Naive thymus-derived CD4-positive, alpha-beta T cell (primary cell): ENCODE measurements at regions of chr9 and their contacts with region 1.

Region 1: DNA sequence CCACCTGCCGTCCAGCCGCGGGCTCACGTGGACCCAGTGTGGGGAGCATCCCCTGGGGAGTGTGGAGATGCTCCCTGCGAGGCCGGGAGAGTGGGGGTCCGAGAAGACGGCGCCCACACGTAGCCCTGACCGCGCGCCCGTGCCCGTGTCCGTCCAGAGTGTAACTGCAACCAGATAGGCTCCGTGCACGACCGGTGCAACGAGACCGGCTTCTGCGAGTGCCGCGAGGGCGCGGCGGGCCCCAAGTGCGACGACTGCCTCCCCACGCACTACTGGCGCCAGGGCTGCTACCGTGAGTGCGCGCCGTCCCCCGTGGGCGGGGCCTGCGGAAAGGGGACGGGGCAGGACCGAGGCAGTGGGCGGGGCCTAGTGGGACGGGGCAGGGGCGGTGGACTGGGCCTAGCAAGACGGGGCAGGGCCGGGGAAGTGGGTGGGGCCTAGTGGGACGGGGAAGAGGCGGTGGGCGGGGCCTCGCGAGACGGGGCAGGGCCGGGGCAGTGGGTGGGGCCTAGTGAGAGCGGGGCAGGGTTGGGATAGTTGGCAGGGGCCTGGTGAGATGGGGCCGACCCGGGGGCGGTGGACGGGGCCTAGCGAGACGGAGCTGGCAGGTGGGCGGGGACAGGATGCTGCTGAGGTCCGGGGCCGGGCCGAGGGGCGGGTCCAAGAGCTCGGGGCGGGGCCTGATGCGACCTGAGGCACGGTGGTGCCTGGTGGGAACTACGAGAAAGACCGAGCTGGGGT is 79.1 kb downstream of the NTNG2 start:
- DNase-seq: peak; percentile 98 to 100 (median 99)
- ATAC-seq: peak; percentile 94
- H3K4me3 ChIP-seq: peak overlapping the region; percentile 77
- H3K4me3 Mint-ChIP-seq: peak overlapping the region; percentile 97 to 99 (median 98)
- H3K27ac ChIP-seq: peak overlapping the region; percentile 69
- H3K27ac Mint-ChIP-seq: peak overlapping the region; percentile 90 to 96 (median 94)
- H3K4me1 ChIP-seq: peaks cover 11 to 17% of the 10 kb centered on the region in 2 donors
- H3K4me1 Mint-ChIP-seq: peaks cover 5 to 24% (median 21%) of the 10 kb centered on the region in 7 donors
- H3K27me3 ChIP-seq: no peaks in the 10 kb centered on the region
- H3K27me3 Mint-ChIP-seq: peaks cover 0 to 15% (median 0%) of the 10 kb centered on the region in 5 donors

Region 2: DNA sequence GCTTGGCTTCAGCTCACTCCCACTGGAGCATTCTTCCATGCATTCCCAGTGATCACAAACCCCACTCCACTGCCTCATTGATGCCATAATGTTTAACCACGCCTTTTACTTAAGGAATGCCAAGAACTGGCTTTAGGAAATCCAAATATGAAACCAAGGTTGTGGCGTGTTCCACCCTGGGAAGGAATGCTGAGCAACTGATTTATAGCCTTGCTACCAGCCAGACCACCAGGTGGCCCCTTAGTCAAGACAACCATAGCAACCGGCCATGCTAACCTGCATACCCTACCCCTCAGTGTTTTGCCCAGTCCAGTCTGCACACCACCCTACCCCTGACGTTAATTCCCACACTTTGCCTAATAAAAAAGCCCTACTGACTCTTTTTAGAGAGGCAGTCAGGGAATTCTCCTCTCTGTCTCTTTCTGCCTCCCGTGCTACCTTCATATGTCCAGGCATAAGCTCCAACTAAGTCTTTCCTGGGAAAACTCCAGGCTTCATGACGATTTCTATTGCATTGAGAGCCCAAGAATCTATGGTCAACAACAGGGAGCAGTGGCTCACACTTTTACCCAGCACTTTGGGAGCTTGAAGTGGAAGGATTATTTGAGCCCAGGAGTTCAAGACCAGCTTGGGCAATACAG is 874.0 kb before region 1 on chr9:
- CTCF ChIA-PET with region 1: no interaction called
- POLR2A ChIA-PET with region 1: no interaction called
- intact Hi-C with region 1: loop called in 1 of 2 experiments (anchors 5 kb)
- DNase-seq: no peak
- ATAC-seq: no peak
- H3K4me3 ChIP-seq: no peak overlapping the region
- H3K4me3 Mint-ChIP-seq: no peak overlapping the region
- H3K27ac ChIP-seq: no peak overlapping the region
- H3K27ac Mint-ChIP-seq: peak overlapping the region in 1 of 9 donors; percentile 31
- H3K4me1 ChIP-seq: peaks cover 0 to under 1% of the 10 kb centered on the region in 2 donors
- H3K4me1 Mint-ChIP-seq: peaks cover 1 to 43% (median 19%) of the 10 kb centered on the region in 7 donors
- H3K27me3 ChIP-seq: no peaks in the 10 kb centered on the region
- H3K27me3 Mint-ChIP-seq: no peaks in the 10 kb centered on the region

Region 3: GRCh38 chr9:131755541-131756198 is 485.3 kb before region 1 on chr9:
- CTCF ChIA-PET with region 1: interaction called, 7 read pairs
- POLR2A ChIA-PET with region 1: interaction called, 3 read pairs
- intact Hi-C with region 1: loop called in 1 of 2 experiments (anchors 2 kb)
- DNase-seq: peak; percentile 67 to 84 (median 80)
- ATAC-seq: peak; percentile 100
- H3K4me3 ChIP-seq: no peak overlapping the region
- H3K4me3 Mint-ChIP-seq: peak overlapping the region in 6 of 10 donors; percentile 1 to 68 (median 33)
- H3K27ac ChIP-seq: no peak overlapping the region
- H3K27ac Mint-ChIP-seq: peak overlapping the region in 5 of 9 donors; percentile 7 to 65 (median 23)
- H3K4me1 ChIP-seq: peaks cover 0 to 4% of the 10 kb centered on the region in 2 donors
- H3K4me1 Mint-ChIP-seq: peaks cover 5 to 7% (median 6%) of the 10 kb centered on the region in 7 donors
- H3K27me3 ChIP-seq: no peaks in the 10 kb centered on the region
- H3K27me3 Mint-ChIP-seq: peaks cover 0 to 28% (median 0%) of the 10 kb centered on the region in 5 donors

Region 4: GRCh38 chr9:132160802-132161742 is 79.9 kb before region 1 on chr9:
- CTCF ChIA-PET with region 1: interaction called, 5 read pairs
- POLR2A ChIA-PET with region 1: interaction called, 4 read pairs
- intact Hi-C with region 1: loop called in 1 of 2 experiments (anchors 2 kb)
- DNase-seq: peak in 8 of 9 donors; percentile 21 to 54 (median 25)
- ATAC-seq: peak; percentile 83
- H3K4me3 ChIP-seq: peak overlapping the region; percentile 64
- H3K4me3 Mint-ChIP-seq: peak overlapping the region; percentile 90 to 100 (median 94)
- H3K27ac ChIP-seq: no peak overlapping the region
- H3K27ac Mint-ChIP-seq: peak overlapping the region in 7 of 9 donors; percentile 41 to 87 (median 72)
- H3K4me1 ChIP-seq: peaks cover 6% of the 10 kb centered on the region in 2 donors
- H3K4me1 Mint-ChIP-seq: peaks cover 6 to 17% (median 9%) of the 10 kb centered on the region in 7 donors
- H3K27me3 ChIP-seq: peaks cover 0 to 16% of the 10 kb centered on the region in 2 donors
- H3K27me3 Mint-ChIP-seq: peaks cover 37 to 66% (median 47%) of the 10 kb centered on the region in 5 donors

Region 5: DNA sequence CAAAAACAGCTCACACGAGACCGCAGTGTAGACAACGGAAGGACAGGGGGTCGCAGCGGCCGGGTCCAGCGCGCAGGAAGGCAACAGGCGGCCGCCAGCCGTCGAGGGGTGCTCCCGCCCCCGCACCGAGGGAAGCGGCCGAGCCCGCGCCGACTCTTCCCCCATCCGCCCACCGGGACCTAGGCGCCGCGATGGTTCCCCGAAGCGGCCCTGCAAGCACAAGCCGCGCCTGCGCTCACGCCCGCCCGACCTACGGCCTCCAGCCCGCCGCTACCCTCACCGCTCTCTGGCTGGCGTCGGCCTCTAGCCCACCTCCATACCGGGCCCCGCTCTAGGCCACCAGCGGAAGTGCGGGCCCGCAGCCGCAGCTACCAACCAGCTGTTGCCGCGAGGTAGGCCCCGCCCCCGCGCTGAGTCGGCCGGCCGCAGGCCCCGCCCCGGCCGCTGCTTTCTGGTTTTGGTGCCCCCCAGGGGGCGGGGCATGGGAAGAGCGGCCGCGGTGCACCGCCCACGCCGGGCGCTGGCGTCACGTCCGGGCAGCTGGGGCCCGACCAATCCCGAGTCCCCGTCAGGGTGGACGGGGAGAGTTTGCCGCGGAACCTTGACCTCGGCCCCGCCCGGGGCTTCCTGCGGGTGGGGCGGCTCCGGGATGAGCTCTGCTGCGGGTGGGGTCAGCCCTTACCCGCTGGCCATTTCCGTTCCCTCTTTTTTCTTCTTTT is 113.9 kb after region 1 on chr9 and contains the start of gene SETX:
- CTCF ChIA-PET with region 1: no interaction called
- POLR2A ChIA-PET with region 1: interaction called, 21 read pairs
- intact Hi-C with region 1: loop called (anchors 1 kb)
- DNase-seq: peak; percentile 80 to 96 (median 88)
- ATAC-seq: peak; percentile 95
- H3K4me3 ChIP-seq: peak within 1 kb of the TSS; percentile 96
- H3K4me3 Mint-ChIP-seq: peak within 1 kb of the TSS; percentile 78 to 97 (median 94)
- H3K27ac ChIP-seq: peak within 1 kb of the TSS; percentile 94
- H3K27ac Mint-ChIP-seq: peak within 1 kb of the TSS; percentile 68 to 99 (median 97)
- H3K4me1 ChIP-seq: peaks cover 35 to 39% of the 10 kb centered on the region in 2 donors
- H3K4me1 Mint-ChIP-seq: peaks cover 24 to 48% (median 45%) of the 10 kb centered on the region in 7 donors
- H3K27me3 ChIP-seq: no peaks in the 10 kb centered on the region
- H3K27me3 Mint-ChIP-seq: peaks cover 0 to 3% (median 0%) of the 10 kb centered on the region in 5 donors
- total RNA-seq, gene SETX: 52.0 to 83.2 (median 70.2) TPM

Region 6: GRCh38 chr9:133335878-133336811 is 1095.2 kb after region 1 on chr9 and contains the start of gene SURF6:
- CTCF ChIA-PET with region 1: no interaction called
- POLR2A ChIA-PET with region 1: no interaction called
- intact Hi-C with region 1: loop called in 1 of 2 experiments (anchors 2 kb)
- DNase-seq: peak; percentile 90 to 96 (median 93)
- ATAC-seq: peak; percentile 98
- H3K4me3 ChIP-seq: peak within 1 kb of the TSS; percentile 92
- H3K4me3 Mint-ChIP-seq: peak within 1 kb of the TSS; percentile 93 to 98 (median 96)
- H3K27ac ChIP-seq: peak within 1 kb of the TSS; percentile 82
- H3K27ac Mint-ChIP-seq: peak within 1 kb of the TSS; percentile 90 to 96 (median 94)
- H3K4me1 ChIP-seq: peaks cover 21 to 31% of the 10 kb centered on the region in 2 donors
- H3K4me1 Mint-ChIP-seq: peaks cover 22 to 59% (median 38%) of the 10 kb centered on the region in 7 donors
- H3K27me3 ChIP-seq: no peaks in the 10 kb centered on the region
- H3K27me3 Mint-ChIP-seq: no peaks in the 10 kb centered on the region
- total RNA-seq, gene SURF6: 15.4 to 33.5 (median 23.4) TPM